Right cardiac atrium (tissue), 5 donors: ENCODE measurements at regions of chr17 and their contacts with region 1.

Region 1: GRCh38 chr17:75784473-75785015 is at the start of gene UNK:
- DNase-seq: peak; percentile 97 to 98 (median 98)
- ATAC-seq: peak; percentile 95 to 97
- H3K4me3 ChIP-seq: peak within 1 kb of the TSS; percentile 52
- H3K27ac ChIP-seq: peak within 1 kb of the TSS; percentile 98
- H3K4me1 ChIP-seq: peaks cover 5% of the 10 kb centered on the region
- H3K27me3 ChIP-seq: no peaks in the 10 kb centered on the region
- total RNA-seq, gene UNK: 18.2 to 22.5 (median 19.9) TPM

Region 2: GRCh38 chr17:75827252-75828115 is 42.9 kb after region 1 on chr17:
- intact Hi-C with region 1: loop called in 1 of 4 experiments (anchors 5 kb)
- DNase-seq: peak; percentile 76 to 91 (median 89)
- ATAC-seq: peak; percentile 58 to 75
- H3K4me3 ChIP-seq: no peak overlapping the region
- H3K27ac ChIP-seq: peak overlapping the region; percentile 44
- H3K4me1 ChIP-seq: peaks cover 9% of the 10 kb centered on the region
- H3K27me3 ChIP-seq: no peaks in the 10 kb centered on the region

Region 3: GRCh38 chr17:75896415-75897159 is 112.0 kb after region 1 on chr17 and contains the start of gene TRIM65:
- intact Hi-C with region 1: loop called in 1 of 4 experiments (anchors 10 kb)
- DNase-seq: peak; percentile 91 to 96 (median 95)
- ATAC-seq: peak; percentile 80 to 87
- H3K4me3 ChIP-seq: peak within 1 kb of the TSS; percentile 60
- H3K27ac ChIP-seq: peak within 1 kb of the TSS; percentile 90
- H3K4me1 ChIP-seq: no peaks in the 10 kb centered on the region
- H3K27me3 ChIP-seq: no peaks in the 10 kb centered on the region
- total RNA-seq, gene TRIM65: 5.7 to 10.7 (median 7.7) TPM